PC-9 (cell line): ENCODE measurements at regions of chr12 and their contacts with region 1.

Region 1: GRCh38 chr12:27733052-27733656 is 22.5 kb downstream of the MRPS35 start:
- DNase-seq: peak in 1 of 2 experiments; percentile 36
- H3K4me3 ChIP-seq: no peak overlapping the region
- H3K27ac ChIP-seq: no peak overlapping the region
- H3K4me1 ChIP-seq: no peaks in the 10 kb centered on the region
- H3K27me3 ChIP-seq: no peaks in the 10 kb centered on the region
- CTCF ChIP-seq: peak; percentile 95

Region 2: GRCh38 chr12:27751386-27752047 is 18.4 kb after region 1 on chr12:
- CTCF ChIA-PET with region 1: no interaction called
- POLR2A ChIA-PET with region 1: no interaction called
- intact Hi-C with region 1: no loop called
- DNase-seq: peak in 1 of 2 experiments; percentile 16
- H3K4me3 ChIP-seq: no peak overlapping the region
- H3K27ac ChIP-seq: peak overlapping the region; percentile 53
- H3K4me1 ChIP-seq: peaks cover 35% of the 10 kb centered on the region
- H3K27me3 ChIP-seq: no peaks in the 10 kb centered on the region
- CTCF ChIP-seq: no peak

Region 3: DNA sequence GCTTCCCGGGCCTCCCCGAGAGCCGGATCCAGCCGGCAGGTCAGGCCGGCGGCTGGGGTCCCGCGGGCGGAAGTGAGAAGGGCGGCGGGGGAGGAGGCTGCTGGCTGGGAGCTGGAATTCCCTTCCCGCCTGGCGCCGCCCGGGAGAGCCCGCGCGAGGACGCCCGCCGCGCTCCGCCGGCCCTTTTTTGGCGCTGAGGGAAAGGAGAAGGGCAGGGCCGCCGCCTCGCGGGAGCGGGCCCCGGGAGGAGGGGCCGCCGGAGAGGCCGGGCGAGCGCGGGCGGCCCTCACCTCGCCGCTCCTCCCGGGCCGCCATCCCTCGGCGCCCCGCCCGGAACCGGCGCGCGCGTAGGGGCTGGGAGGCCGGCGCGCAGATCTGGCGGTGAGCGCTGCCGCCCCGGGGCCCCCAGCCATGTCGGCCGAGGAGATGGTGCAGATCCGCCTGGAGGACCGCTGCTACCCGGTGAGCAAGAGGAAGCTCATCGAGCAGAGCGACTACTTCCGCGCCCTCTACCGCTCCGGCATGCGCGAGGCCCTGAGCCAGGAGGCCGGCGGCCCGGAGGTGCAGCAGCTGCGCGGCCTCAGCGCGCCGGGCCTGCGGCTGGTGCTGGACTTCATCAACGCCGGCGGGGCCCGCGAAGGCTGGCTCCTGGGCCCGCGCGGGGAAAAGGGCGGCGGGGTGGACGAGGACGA is 46.9 kb after region 1 on chr12 and contains the starts of genes KLHL42 and MANSC4:
- CTCF ChIA-PET with region 1: no interaction called
- POLR2A ChIA-PET with region 1: no interaction called
- intact Hi-C with region 1: loop called (anchors 5 kb)
- DNase-seq: peak; percentile 59 to 77
- H3K4me3 ChIP-seq: peak within 1 kb of the TSS; percentile 74
- H3K27ac ChIP-seq: peak within 1 kb of the TSS; percentile 64
- H3K4me1 ChIP-seq: peaks cover 45% of the 10 kb centered on the region
- H3K27me3 ChIP-seq: no peaks in the 10 kb centered on the region
- CTCF ChIP-seq: no peak; the same call in 1 of the 2 replicates
- total RNA-seq, gene KLHL42: 33.6 and 34.5 TPM in 2 replicates
- total RNA-seq, gene MANSC4: not detected in 2 replicates

Region 4: GRCh38 chr12:27840244-27840999 is 107.3 kb after region 1 on chr12:
- CTCF ChIA-PET with region 1: interaction called, 3 read pairs
- POLR2A ChIA-PET with region 1: no interaction called
- intact Hi-C with region 1: loop called (anchors 2 kb)
- DNase-seq: no peak
- H3K4me3 ChIP-seq: no peak overlapping the region
- H3K27ac ChIP-seq: no peak overlapping the region
- H3K4me1 ChIP-seq: no peaks in the 10 kb centered on the region
- H3K27me3 ChIP-seq: no peaks in the 10 kb centered on the region
- CTCF ChIP-seq: peak; percentile 61

Region 5: DNA sequence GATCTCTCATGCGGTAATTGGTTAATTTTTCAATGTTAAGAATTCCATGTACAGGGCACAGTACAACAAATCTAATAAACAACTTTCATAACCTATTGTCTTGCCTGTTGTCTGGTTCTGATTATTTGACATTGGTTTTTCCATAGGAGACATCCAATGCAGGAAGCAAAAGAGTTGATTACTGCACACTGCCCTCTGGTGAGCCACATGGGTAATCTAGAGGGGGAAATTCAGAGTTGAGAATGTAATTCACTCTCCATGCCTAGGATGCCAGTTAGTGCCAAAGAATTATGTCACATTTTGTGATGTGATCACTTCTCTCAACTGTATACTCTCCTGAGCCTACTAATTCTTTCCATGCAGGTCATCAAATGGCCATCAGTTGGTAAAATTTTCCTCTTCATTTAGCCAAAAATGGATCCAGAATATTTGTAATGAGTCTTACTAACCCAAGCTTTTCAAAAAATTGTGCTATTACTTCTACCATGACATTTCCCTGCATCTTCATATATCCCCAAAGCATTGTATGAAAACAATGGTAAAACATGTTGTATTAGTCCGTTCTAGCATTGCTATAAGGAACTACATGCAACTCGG is 439.4 kb after region 1 on chr12:
- CTCF ChIA-PET with region 1: no interaction called
- POLR2A ChIA-PET with region 1: no interaction called
- intact Hi-C with region 1: loop called (anchors 1 kb)
- DNase-seq: peak in 1 of 2 experiments; percentile 31
- H3K4me3 ChIP-seq: no peak overlapping the region
- H3K27ac ChIP-seq: no peak overlapping the region
- H3K4me1 ChIP-seq: no peaks in the 10 kb centered on the region
- H3K27me3 ChIP-seq: no peaks in the 10 kb centered on the region
- CTCF ChIP-seq: peak; percentile 72

Region 6: DNA sequence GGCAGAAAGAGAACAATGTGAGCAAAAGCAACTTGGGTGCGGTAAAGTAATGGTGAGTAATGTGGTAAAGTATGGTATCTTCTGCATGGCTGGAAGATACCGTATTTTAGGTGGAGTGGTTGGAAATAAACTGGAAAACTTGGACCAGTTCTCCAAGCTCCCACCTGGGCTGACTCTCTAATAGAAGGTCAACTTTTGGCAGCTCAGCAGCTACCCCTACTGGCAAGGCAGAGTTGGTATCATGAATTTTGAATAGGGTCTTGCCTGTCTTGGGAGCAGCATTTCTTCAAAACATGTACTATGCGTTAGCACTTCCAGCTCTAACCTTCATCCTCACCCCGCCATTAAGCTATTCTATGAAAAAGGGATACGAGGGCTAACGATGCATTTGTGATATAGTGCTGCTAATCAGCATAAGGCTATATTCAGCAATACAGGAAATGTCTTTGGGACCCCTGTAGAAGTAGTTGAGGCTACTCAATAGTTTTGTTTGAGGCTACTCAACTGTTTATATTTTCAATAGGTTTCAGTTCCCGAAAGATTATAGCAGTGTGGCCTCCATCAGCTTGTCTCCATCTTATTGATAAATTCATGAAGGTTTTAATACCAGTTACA is 1139.6 kb after region 1 on chr12:
- CTCF ChIA-PET with region 1: no interaction called
- POLR2A ChIA-PET with region 1: no interaction called
- intact Hi-C with region 1: loop called (anchors 1 kb)
- DNase-seq: peak; percentile 56 to 62
- H3K4me3 ChIP-seq: no peak overlapping the region
- H3K27ac ChIP-seq: no peak overlapping the region
- H3K4me1 ChIP-seq: 0 out of 2 replicates have a peak, but pooled peaks cover 11% of the 10 kb centered on the region
- H3K27me3 ChIP-seq: no peaks in the 10 kb centered on the region
- CTCF ChIP-seq: peak; percentile 87

Region 7: GRCh38 chr12:28998637-28999120 is 1265.5 kb after region 1 on chr12:
- CTCF ChIA-PET with region 1: no interaction called
- POLR2A ChIA-PET with region 1: no interaction called
- intact Hi-C with region 1: loop called (anchors 1 kb)
- DNase-seq: peak in 1 of 2 experiments; percentile 35
- H3K4me3 ChIP-seq: no peak overlapping the region
- H3K27ac ChIP-seq: no peak overlapping the region
- H3K4me1 ChIP-seq: no peaks in the 10 kb centered on the region
- H3K27me3 ChIP-seq: no peaks in the 10 kb centered on the region
- CTCF ChIP-seq: peak; percentile 73